WTC11 (cell line): ENCODE measurements at regions of chr10 and their contacts with region 1.

Region 1: DNA sequence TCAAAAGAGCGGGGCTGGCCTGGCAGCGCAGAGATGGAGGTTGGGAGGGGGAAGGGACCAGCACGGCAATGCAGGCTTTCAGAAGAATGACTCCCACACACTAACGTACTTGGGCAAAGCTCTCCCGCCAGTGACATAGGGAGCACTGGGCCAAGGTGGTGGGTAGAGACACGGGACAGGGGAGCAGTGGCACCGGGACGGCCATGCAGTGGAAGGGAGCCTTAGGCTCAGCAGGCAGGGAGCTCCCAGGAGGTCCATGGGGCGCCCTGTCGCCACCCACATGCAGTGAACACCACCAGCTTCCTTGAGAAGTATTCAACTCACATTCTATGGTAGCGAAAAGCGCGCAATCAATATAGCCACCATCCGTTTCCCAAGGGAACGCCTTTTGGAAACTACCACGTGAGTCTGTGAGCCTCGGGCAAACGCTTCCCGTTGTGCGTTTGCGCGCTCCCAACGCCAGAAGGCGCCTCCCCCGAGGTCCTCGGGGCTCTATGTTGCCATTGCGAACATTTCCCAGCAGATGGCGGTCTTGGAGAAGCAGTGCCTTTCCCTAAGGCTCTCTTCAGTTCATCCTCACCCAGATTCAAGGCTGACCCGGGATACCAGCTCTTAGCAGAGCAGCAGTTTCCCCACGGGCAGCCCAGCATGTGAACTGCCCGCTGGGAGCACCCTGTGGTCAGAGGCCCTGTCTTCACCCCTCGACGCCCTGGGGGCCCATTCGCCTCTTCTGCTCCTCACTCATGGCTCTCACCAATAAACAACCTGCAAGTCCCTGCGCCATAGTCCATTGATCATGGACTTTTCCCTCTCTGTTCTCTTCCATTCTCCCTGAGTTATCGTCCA is 16.4 kb upstream of the OPALIN start:
- DNase-seq: peak; percentile 92
- ATAC-seq: peak; percentile 86
- H3K4me3 Mint-ChIP-seq: peak overlapping the region; percentile 67
- H3K27ac Mint-ChIP-seq: no peak overlapping the region
- H3K4me1 Mint-ChIP-seq: peaks cover 23% of the 10 kb centered on the region
- H3K27me3 Mint-ChIP-seq: peaks cover 7% of the 10 kb centered on the region
- CTCF ChIP-seq: peak; percentile 78

Region 2: DNA sequence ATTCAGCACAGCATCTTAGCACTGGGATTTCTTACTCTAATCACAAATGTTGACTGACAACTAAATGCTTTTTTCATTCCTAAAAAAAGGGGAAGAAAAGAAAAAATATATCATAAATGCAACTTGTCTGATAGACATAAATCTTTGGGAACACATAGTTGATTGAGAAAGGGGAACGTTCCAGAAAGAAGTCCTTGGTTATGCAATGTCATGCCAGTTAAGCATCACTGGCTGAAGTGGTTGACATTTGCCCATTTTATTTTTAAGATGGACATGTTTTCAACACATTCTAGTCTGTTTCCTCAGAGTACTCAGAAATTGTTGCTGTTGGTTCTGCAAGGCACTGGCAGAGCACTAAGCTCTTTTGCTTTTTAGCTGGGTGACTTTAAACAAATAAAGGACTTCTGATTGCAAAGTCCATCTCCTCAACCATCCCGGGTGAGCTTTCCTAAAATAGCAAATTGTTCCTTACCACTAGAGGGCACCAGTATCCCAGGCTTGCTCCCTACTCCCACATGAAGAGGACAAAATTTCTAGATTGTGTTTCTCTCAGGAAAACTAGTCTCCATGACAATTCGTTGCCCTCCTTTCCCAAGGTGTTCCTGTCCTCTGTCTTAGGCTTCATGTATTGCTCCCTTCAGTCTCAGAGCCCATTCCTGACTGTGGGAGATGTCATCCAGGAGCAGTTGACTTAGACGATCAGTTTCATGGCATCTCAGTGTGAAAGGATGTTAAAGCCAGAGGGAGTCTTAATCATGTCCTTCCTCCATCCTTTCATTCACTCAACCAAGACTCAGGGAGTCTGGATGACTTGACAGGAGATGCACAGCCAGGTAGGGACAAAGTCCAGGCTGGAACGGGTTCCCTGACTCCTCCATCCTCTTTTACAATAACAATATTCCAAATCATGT is 40.3 kb before region 1 on chr10:
- CTCF ChIA-PET with region 1: interaction called, 39 read pairs
- POLR2A ChIA-PET with region 1: no interaction called
- DNase-seq: no peak
- ATAC-seq: peak; percentile 79
- H3K4me3 Mint-ChIP-seq: no peak overlapping the region
- H3K27ac Mint-ChIP-seq: no peak overlapping the region
- H3K4me1 Mint-ChIP-seq: peaks cover 26% of the 10 kb centered on the region
- H3K27me3 Mint-ChIP-seq: peaks cover 4% of the 10 kb centered on the region
- CTCF ChIP-seq: peak; percentile 75

Region 3: DNA sequence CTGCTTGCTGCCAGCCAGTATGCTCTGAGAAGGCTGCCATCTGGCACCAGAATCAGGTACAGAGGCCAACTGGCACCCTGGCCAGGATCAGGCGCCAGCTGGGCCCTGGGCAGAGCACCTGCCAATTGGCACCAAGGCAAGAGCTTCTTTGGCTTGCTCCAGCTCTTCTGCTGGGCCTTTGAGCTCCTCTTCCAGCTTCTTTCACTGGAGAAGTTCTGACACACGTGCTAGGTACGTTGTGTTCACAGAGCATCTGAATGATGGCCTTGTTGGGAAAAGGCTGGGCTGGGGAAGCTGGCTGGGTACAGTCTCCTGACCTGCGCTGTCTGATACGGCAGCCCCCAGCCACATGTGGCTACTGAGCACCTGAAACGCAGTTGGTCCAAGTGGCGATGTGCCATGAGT is 15.3 kb after region 1 on chr10:
- CTCF ChIA-PET with region 1: interaction called, 41 read pairs
- POLR2A ChIA-PET with region 1: no interaction called
- DNase-seq: no peak
- ATAC-seq: no peak
- H3K4me3 Mint-ChIP-seq: no peak overlapping the region
- H3K27ac Mint-ChIP-seq: no peak overlapping the region
- H3K4me1 Mint-ChIP-seq: no peaks in the 10 kb centered on the region
- H3K27me3 Mint-ChIP-seq: no peaks in the 10 kb centered on the region
- CTCF ChIP-seq: no peak

Region 4: GRCh38 chr10:96491299-96491698 is 116.1 kb after region 1 on chr10:
- CTCF ChIA-PET with region 1: interaction called, 13 read pairs
- POLR2A ChIA-PET with region 1: no interaction called
- DNase-seq: no peak
- ATAC-seq: peak; percentile 53; the same call in 1 of the 2 replicates
- H3K4me3 Mint-ChIP-seq: no peak overlapping the region
- H3K27ac Mint-ChIP-seq: no peak overlapping the region
- H3K4me1 Mint-ChIP-seq: peaks cover 34% of the 10 kb centered on the region
- H3K27me3 Mint-ChIP-seq: no peaks in the 10 kb centered on the region; the same call in 1 of the 2 replicates
- CTCF ChIP-seq: no peak

Region 5: DNA sequence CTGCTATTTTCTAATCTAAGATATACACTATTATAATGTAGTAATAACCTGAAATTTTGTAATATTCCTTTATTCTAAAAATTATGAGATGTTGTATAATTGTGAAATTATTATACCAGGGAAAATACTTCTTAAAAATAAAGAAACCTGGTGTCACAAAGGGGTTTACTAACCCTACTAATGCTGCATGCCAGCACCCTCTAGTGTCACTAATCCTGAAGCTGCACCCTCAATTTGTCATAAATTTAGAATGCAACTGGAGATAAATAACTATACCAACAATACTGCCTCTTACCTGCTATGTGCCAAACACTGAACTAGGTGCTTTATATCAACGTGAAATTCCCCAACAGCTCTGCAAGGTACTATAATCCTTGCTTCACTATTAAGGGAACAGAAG is 180.8 kb after region 1 on chr10:
- CTCF ChIA-PET with region 1: interaction called, 13 read pairs
- POLR2A ChIA-PET with region 1: no interaction called
- DNase-seq: no peak
- ATAC-seq: no peak
- H3K4me3 Mint-ChIP-seq: no peak overlapping the region
- H3K27ac Mint-ChIP-seq: no peak overlapping the region
- H3K4me1 Mint-ChIP-seq: no peaks in the 10 kb centered on the region
- H3K27me3 Mint-ChIP-seq: no peaks in the 10 kb centered on the region
- CTCF ChIP-seq: no peak

Region 6: GRCh38 chr10:97037365-97038361 is 662.5 kb after region 1 on chr10:
- CTCF ChIA-PET with region 1: interaction called, 11 read pairs
- POLR2A ChIA-PET with region 1: no interaction called
- DNase-seq: peak; percentile 95
- ATAC-seq: peak; percentile 94
- H3K4me3 Mint-ChIP-seq: peak overlapping the region; percentile 45
- H3K27ac Mint-ChIP-seq: no peak overlapping the region
- H3K4me1 Mint-ChIP-seq: peaks cover 28% of the 10 kb centered on the region
- H3K27me3 Mint-ChIP-seq: peaks cover 5% of the 10 kb centered on the region
- CTCF ChIP-seq: peak; percentile 92